ENCODE measurements at regions of chr9 and their contacts with region 1.

Region 1: GRCh38 chr9:100084734-100085133 is 14.1 kb downstream of the ERP44 start:
- DNase-seq: no peak
- H3K4me3 Mint-ChIP-seq: no peak overlapping the region
- H3K27ac Mint-ChIP-seq: no peak overlapping the region
- H3K4me1 Mint-ChIP-seq: peaks cover 70% of the 10 kb centered on the region
- H3K27me3 Mint-ChIP-seq: no peaks in the 10 kb centered on the region

Region 2: DNA sequence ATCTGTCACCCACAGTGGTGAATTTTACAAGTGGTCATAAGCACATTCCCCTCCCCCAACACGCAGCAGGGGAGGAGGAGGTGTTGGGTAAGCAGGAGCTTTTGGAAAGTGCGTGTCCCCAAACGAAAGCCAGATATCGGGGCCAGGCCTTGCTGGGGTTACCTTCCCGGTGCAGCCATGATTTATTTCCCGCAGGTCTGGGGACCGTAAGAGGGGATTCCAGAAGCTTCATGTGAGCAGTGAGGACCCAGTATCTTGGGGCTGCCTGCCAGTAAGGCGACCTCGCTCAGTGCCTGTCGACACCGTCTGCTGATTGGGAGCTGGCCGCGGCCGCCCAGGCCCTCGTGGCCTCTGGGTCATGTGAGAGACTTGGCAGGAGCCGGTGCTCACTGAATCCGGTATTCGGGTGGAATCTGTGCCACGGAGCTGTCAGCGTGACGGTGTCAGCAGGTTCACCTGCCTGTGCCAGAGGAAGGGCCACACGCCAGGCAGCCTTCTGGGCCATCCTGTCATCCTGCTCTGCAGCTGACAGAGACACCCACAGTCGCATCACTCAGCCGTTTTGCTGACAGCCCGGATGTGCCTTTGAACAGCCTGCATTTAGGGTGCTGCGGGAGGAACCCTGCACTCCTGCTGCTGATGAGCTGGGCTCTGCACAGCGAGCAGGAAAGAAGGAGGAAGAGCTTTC is 825.4 kb before region 1 on chr9:
- CTCF ChIA-PET with region 1: no interaction called
- POLR2A ChIA-PET with region 1: no interaction called
- intact Hi-C with region 1: loop called (anchors 10 kb)
- DNase-seq: peak; percentile 71
- H3K4me3 Mint-ChIP-seq: peak overlapping the region; percentile 36
- H3K27ac Mint-ChIP-seq: no peak overlapping the region
- H3K4me1 Mint-ChIP-seq: peaks cover 27% of the 10 kb centered on the region
- H3K27me3 Mint-ChIP-seq: peaks cover 8% of the 10 kb centered on the region

Region 3: DNA sequence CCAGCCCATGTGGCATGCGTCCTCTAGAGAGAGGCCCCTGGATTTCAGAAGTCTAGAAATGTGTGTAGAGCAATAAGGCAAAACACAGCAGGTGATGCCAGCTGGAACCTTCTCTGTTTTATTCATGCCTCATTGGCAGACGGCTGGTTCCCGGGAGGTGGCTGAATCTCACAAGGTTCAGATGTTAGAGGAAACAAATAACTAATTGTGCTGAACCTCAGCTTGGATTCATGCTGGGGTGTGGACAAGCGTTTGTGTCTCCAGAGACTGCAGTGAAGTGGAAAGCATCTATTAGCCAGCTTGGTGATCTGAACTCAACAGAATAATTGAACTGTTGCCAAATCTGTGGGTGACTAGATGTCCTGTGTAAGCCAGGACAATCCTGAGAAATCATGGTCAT is 394.2 kb before region 1 on chr9:
- CTCF ChIA-PET with region 1: no interaction called
- POLR2A ChIA-PET with region 1: no interaction called
- intact Hi-C with region 1: no loop called
- DNase-seq: no peak
- H3K4me3 Mint-ChIP-seq: no peak overlapping the region
- H3K27ac Mint-ChIP-seq: no peak overlapping the region
- H3K4me1 Mint-ChIP-seq: no peaks in the 10 kb centered on the region
- H3K27me3 Mint-ChIP-seq: peaks cover 5% of the 10 kb centered on the region

Region 4: GRCh38 chr9:99954819-99955218 is 129.9 kb before region 1 on chr9:
- CTCF ChIA-PET with region 1: no interaction called
- POLR2A ChIA-PET with region 1: no interaction called
- intact Hi-C with region 1: loop called (anchors 10 kb)
- DNase-seq: no peak
- H3K4me3 Mint-ChIP-seq: no peak overlapping the region
- H3K27ac Mint-ChIP-seq: peak overlapping the region; percentile 62
- H3K4me1 Mint-ChIP-seq: peaks cover 22% of the 10 kb centered on the region
- H3K27me3 Mint-ChIP-seq: no peaks in the 10 kb centered on the region

Region 5: DNA sequence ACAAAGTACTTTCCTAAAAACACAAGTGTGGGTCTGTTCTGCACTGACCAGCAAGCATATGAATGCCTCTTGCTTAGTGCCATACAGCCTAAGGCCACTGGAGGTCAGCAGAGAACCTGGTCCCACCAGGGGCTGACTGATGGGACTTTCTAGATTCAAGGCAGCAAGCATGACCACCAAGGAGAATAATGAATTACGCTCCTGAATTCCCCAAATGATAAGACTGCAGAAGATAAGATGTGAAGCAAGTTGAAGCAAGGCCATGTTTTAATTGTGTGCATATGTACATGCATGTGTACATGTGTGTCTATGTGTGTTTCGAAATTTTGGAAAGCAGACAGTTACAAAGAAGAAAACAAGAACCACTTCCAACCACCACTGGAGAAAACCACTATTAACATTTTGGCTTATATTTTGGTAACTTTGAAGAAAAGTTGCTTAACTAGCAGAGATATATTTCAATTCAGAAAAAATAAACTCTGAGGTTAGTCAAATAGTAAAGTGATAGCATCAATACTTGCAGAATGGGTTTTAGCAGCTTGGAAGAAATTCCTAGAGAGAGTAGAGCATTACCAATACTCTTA is 56.4 kb before region 1 on chr9:
- CTCF ChIA-PET with region 1: interaction called, 5 read pairs
- POLR2A ChIA-PET with region 1: no interaction called
- intact Hi-C with region 1: loop called (anchors 5 kb)
- DNase-seq: peak; percentile 81
- H3K4me3 Mint-ChIP-seq: no peak overlapping the region
- H3K27ac Mint-ChIP-seq: no peak overlapping the region
- H3K4me1 Mint-ChIP-seq: peaks cover 7% of the 10 kb centered on the region
- H3K27me3 Mint-ChIP-seq: no peaks in the 10 kb centered on the region

Region 6: DNA sequence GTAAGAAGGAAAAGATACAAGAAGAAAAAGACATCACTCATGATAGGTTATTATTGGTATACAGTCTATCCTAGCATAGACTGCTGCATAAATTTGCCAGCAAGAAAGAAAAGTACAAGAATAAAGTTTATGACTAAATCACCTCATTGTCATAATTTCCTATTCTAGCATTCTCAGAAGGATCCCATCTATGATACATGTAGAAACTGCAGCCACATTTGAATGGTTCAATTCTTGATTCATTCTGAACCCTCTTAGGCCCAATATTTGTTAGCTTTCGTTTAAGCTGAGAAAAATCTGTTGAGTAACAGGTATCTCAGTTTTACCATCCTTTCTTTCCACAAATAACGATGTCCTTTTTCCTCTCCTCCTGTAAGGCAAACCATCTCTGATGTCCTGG is 35.6 kb after region 1 on chr9:
- CTCF ChIA-PET with region 1: no interaction called
- POLR2A ChIA-PET with region 1: no interaction called
- intact Hi-C with region 1: loop called (anchors 1 kb)
- DNase-seq: no peak
- H3K4me3 Mint-ChIP-seq: no peak overlapping the region
- H3K27ac Mint-ChIP-seq: no peak overlapping the region
- H3K4me1 Mint-ChIP-seq: peaks cover 12% of the 10 kb centered on the region
- H3K27me3 Mint-ChIP-seq: no peaks in the 10 kb centered on the region

Region 7: GRCh38 chr9:100216178-100216787 is 131.5 kb after region 1 on chr9:
- CTCF ChIA-PET with region 1: interaction called, 3 read pairs
- POLR2A ChIA-PET with region 1: no interaction called
- intact Hi-C with region 1: loop called (anchors 5 kb)
- DNase-seq: peak; percentile 76
- H3K4me3 Mint-ChIP-seq: no peak overlapping the region
- H3K27ac Mint-ChIP-seq: no peak overlapping the region
- H3K4me1 Mint-ChIP-seq: peaks cover 2% of the 10 kb centered on the region
- H3K27me3 Mint-ChIP-seq: no peaks in the 10 kb centered on the region

Measured in activated CD4-positive, alpha-beta memory T cell treated with anti-CD3 and anti-CD28 coated beads for 36 hours (primary cell).